Activated CD8-positive, alpha-beta T cell treated with anti-CD3 and anti-CD28 coated beads for 36 hours (primary cell): ENCODE measurements at regions of chr10 and their contacts with region 1.

Region 1: DNA sequence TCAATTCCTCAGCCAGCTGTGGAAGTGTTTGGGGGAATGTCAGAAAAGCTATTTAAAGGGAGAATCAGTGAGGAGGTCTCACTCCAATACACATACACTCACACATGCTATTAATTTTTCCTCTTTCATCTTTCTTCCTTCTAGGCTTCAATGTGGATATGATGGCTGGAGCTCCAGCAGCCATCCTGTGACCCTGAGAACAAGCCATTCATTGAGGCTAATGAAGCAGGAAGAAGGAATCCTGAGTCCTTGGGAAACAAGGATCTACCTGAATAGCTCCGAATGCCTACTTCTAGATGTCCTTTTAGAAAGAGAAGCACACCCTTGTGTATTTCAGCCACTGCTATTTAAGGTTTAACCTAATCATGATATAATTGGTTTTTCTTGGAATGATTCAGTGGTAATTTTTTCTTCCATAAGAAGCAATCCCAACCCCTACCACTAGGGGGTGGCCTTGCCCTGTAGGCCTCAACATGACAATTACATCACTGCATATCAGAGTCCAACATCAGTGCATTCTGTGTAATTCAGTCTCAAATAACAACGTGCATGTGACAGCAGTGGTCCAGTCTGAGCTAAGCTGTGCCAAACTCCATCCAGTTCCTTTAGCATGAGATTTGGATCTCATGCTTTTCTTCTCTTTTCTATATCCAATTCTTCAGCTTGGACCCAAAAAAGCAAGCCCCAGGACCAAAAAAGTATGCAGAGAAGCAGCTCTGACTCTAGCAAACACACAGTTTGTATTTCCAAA is 85.3 kb upstream of the ANKRD1 start:
- DNase-seq: peak; percentile 81
- ATAC-seq: peak; percentile 81
- H3K4me3 Mint-ChIP-seq: no peak overlapping the region
- H3K27ac Mint-ChIP-seq: peak overlapping the region; percentile 76
- H3K4me1 Mint-ChIP-seq: peaks cover 41% of the 10 kb centered on the region
- H3K27me3 Mint-ChIP-seq: peaks cover 4% of the 10 kb centered on the region
- CTCF ChIP-seq: peak; percentile 93

Region 2: GRCh38 chr10:90930070-90930837 is 75.9 kb before region 1 on chr10:
- CTCF ChIA-PET with region 1: no interaction called
- POLR2A ChIA-PET with region 1: no interaction called
- intact Hi-C with region 1: no loop called
- DNase-seq: no peak
- ATAC-seq: no peak
- H3K4me3 Mint-ChIP-seq: no peak overlapping the region
- H3K27ac Mint-ChIP-seq: no peak overlapping the region
- H3K4me1 Mint-ChIP-seq: no peaks in the 10 kb centered on the region
- H3K27me3 Mint-ChIP-seq: peaks cover 14% of the 10 kb centered on the region
- CTCF ChIP-seq: no peak

Region 3: DNA sequence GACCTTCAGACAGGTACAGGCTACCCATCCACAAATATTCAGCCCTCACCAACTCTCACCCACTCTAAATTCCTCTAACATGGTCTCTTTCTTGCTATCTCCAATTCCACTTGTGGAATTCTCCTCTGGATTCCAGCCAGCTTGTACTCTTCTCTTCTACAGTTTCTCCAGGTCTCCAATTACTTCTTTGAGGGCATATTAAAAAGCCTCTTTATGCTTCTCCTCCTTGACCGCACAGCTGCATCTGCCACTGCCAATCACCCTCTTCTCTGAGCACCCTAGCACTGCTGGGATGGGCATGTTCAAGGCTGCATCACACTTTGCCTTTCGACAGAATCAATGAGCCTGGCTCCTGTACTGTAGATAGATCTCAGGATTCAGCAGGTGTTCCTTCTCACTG is 16.2 kb after region 1 on chr10:
- CTCF ChIA-PET with region 1: interaction called, 37 read pairs
- POLR2A ChIA-PET with region 1: no interaction called
- intact Hi-C with region 1: no loop called
- DNase-seq: no peak
- ATAC-seq: no peak
- H3K4me3 Mint-ChIP-seq: no peak overlapping the region
- H3K27ac Mint-ChIP-seq: no peak overlapping the region
- H3K4me1 Mint-ChIP-seq: no peaks in the 10 kb centered on the region
- H3K27me3 Mint-ChIP-seq: peaks cover 4% of the 10 kb centered on the region
- CTCF ChIP-seq: no peak

Region 4: GRCh38 chr10:91096274-91096673 is 90.1 kb after region 1 on chr10:
- CTCF ChIA-PET with region 1: interaction called, 4 read pairs
- POLR2A ChIA-PET with region 1: no interaction called
- intact Hi-C with region 1: loop called (anchors 5 kb)
- DNase-seq: peak; percentile 7
- ATAC-seq: peak; percentile 51
- H3K4me3 Mint-ChIP-seq: no peak overlapping the region
- H3K27ac Mint-ChIP-seq: no peak overlapping the region
- H3K4me1 Mint-ChIP-seq: peaks cover 11% of the 10 kb centered on the region
- H3K27me3 Mint-ChIP-seq: peaks cover 4% of the 10 kb centered on the region
- CTCF ChIP-seq: no peak

Region 5: DNA sequence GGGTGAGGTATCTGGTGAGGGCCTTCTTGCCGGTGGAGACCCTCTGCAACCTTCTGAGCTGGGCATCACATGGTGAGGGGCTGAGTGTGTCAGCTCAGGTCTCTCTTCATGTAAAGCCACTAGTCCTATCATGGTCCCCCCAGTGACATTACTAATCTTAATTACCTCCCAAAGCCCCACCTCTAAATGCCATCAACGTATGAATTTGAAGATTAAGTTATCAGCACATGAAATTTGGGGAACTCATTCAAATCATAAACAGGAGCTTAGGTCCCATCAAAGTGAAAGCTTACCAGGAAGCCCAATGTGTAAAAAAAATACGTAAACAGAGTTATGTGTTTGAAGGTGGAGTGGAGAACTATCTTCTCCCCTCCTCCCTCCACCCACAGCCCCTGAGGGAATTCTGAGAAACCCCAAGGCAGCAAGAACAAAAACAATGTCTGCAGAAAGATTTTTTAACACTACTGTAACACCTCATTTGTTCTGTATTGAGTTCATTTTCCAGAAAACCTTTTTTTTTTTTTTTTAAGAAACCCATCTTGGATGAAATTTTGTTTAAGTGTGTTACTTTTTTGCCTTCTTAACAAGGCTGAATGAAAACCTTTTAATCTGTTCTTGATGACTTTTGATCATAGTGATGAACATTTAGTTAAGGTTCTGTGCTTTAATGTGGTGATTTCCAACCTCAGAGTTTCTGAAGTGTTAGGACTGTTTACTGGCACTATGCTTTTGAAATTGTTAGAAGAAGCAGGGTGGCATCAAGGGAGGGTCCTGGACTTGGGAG is 195.2 kb after region 1 on chr10:
- CTCF ChIA-PET with region 1: interaction called, 10 read pairs
- POLR2A ChIA-PET with region 1: no interaction called
- intact Hi-C with region 1: no loop called
- DNase-seq: peak; percentile 77
- ATAC-seq: peak; percentile 65
- H3K4me3 Mint-ChIP-seq: peak overlapping the region; percentile 64
- H3K27ac Mint-ChIP-seq: peak overlapping the region; percentile 85
- H3K4me1 Mint-ChIP-seq: peaks cover 80% of the 10 kb centered on the region
- H3K27me3 Mint-ChIP-seq: no peaks in the 10 kb centered on the region
- CTCF ChIP-seq: no peak

Region 6: DNA sequence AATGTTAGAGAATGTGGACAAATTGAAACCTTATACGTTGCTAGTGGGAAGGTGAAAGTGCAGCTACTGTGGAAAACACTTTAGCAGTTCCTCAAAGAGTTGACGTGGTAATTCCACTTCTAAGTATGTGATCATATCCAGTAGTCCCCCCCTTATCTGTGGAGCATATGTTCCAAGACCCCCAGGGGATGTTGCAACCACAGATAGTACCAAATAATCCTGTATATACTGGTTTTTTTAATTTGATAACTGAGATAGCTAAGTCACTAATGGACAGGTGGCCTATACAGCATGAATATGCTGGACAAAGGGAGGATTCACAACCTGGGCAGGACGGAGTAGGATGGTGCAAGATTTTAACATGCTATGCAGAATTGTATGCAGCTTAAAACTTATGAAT is 251.1 kb after region 1 on chr10:
- CTCF ChIA-PET with region 1: interaction called, 184 read pairs
- POLR2A ChIA-PET with region 1: no interaction called
- intact Hi-C with region 1: no loop called
- DNase-seq: no peak
- ATAC-seq: no peak
- H3K4me3 Mint-ChIP-seq: no peak overlapping the region
- H3K27ac Mint-ChIP-seq: no peak overlapping the region
- H3K4me1 Mint-ChIP-seq: no peaks in the 10 kb centered on the region
- H3K27me3 Mint-ChIP-seq: no peaks in the 10 kb centered on the region
- CTCF ChIP-seq: no peak